Mammary epithelial cell (primary cell): ENCODE measurements at regions of chr17 and their contacts with region 1.

Region 1: GRCh38 chr17:3859940-3860339 is 13.9 kb upstream of the NCBP3 start:
- DNase-seq: no peak
- H3K4me3 ChIP-seq: no peak overlapping the region
- H3K27ac ChIP-seq: no peak overlapping the region
- H3K4me1 ChIP-seq: no peaks in the 10 kb centered on the region
- H3K27me3 ChIP-seq: no peaks in the 10 kb centered on the region
- CTCF ChIP-seq: no peak

Region 2: GRCh38 chr17:3712811-3713463 is 147.0 kb before region 1 on chr17:
- CTCF ChIA-PET with region 1: no interaction called
- dilution Hi-C with region 1: no loop called
- in situ Hi-C with region 1: no loop called
- intact Hi-C with region 1: no loop called
- DNase-seq: no peak
- H3K4me3 ChIP-seq: no peak overlapping the region
- H3K27ac ChIP-seq: no peak overlapping the region
- H3K4me1 ChIP-seq: no peaks in the 10 kb centered on the region
- H3K27me3 ChIP-seq: no peaks in the 10 kb centered on the region
- CTCF ChIP-seq: no peak

Region 3: GRCh38 chr17:3913531-3914311 is 53.8 kb after region 1 on chr17:
- CTCF ChIA-PET with region 1: no interaction called
- dilution Hi-C with region 1: loop called (anchors 5 kb)
- in situ Hi-C with region 1: no loop called
- intact Hi-C with region 1: loop called (anchors 2 kb)
- DNase-seq: peak; percentile 35
- H3K4me3 ChIP-seq: no peak overlapping the region
- H3K27ac ChIP-seq: no peak overlapping the region
- H3K4me1 ChIP-seq: no peaks in the 10 kb centered on the region
- H3K27me3 ChIP-seq: no peaks in the 10 kb centered on the region
- CTCF ChIP-seq: peak; percentile 97 to 98

Region 4: GRCh38 chr17:3959295-3959925 is 99.5 kb after region 1 on chr17:
- CTCF ChIA-PET with region 1: no interaction called
- dilution Hi-C with region 1: loop called (anchors 5 kb)
- in situ Hi-C with region 1: no loop called
- intact Hi-C with region 1: no loop called
- DNase-seq: no peak
- H3K4me3 ChIP-seq: no peak overlapping the region
- H3K27ac ChIP-seq: no peak overlapping the region
- H3K4me1 ChIP-seq: no peaks in the 10 kb centered on the region
- H3K27me3 ChIP-seq: peaks cover 12% of the 10 kb centered on the region
- CTCF ChIP-seq: no peak